ENCODE measurements at regions of chr7 and their contacts with region 1.

Region 1: DNA sequence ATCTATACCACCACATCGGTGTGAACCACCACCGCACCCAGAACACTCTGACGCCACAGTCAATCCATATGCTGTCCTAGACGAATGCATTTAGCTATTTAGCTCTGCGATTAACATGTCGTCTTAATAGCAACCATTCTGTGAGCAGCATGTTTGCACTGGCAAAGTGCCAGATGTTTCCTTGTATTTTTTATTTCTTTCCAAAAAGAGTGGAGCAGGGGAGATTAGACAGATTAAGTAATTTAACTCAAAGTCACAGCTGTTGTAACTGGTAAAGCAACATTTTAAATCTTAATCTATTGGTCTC is 57.0 kb upstream of the ARL4A start:
- DNase-seq: no peak
- CTCF ChIP-seq: no peak

Region 2: DNA sequence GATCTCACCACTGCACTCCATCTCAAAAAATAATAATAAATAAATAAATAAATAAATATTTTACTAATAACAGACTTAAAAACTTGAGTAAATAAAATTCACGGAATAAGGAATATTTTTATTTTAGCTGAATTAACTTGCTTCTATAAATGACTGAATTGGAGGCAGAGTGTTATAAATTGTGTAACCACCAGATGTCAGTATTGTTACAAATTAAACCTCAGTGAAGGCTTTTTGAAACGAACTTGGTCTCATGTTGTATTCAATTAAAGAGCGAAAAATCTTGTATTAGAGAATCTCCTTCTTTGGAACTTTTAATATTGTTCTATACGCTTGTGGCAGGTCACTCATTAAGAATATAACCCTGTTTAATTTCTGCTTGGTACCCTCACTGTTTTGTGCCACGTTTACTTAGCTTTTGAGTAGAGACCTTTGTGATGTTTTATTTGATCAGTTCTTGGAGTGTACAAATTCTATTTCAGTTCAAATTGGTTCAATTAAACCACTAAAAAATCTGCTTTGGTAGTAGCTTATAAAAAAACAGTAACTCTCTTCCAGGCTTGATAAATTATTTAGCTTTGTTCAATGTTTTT is 105.6 kb before region 1 on chr7:
- CTCF ChIA-PET with region 1: interaction called, 29 read pairs
- POLR2A ChIA-PET with region 1: no interaction called
- DNase-seq: peak; percentile 17
- CTCF ChIP-seq: peak; percentile 54

Region 3: GRCh38 chr7:12851841-12852240 is 221.4 kb after region 1 on chr7:
- CTCF ChIA-PET with region 1: no interaction called
- POLR2A ChIA-PET with region 1: no interaction called
- DNase-seq: no peak
- CTCF ChIP-seq: no peak